Activated naive CD4-positive, alpha-beta T cell treated with anti-CD3 and anti-CD28 coated beads for 36 hours (primary cell): ENCODE measurements at regions of chr1 and their contacts with region 1.

Region 1: GRCh38 chr1:192516776-192517297 is 58.7 kb upstream of the RGS1 start:
- DNase-seq: peak; percentile 76
- H3K4me3 Mint-ChIP-seq: peak overlapping the region; percentile 66
- H3K27ac Mint-ChIP-seq: peak overlapping the region; percentile 79
- H3K4me1 Mint-ChIP-seq: peaks cover 53% of the 10 kb centered on the region
- H3K27me3 Mint-ChIP-seq: no peaks in the 10 kb centered on the region

Region 2: GRCh38 chr1:192489748-192490147 is 27.1 kb before region 1 on chr1:
- CTCF ChIA-PET with region 1: no interaction called
- intact Hi-C with region 1: no loop called
- DNase-seq: peak; percentile 22
- H3K4me3 Mint-ChIP-seq: no peak overlapping the region
- H3K27ac Mint-ChIP-seq: no peak overlapping the region
- H3K4me1 Mint-ChIP-seq: no peaks in the 10 kb centered on the region
- H3K27me3 Mint-ChIP-seq: no peaks in the 10 kb centered on the region

Region 3: DNA sequence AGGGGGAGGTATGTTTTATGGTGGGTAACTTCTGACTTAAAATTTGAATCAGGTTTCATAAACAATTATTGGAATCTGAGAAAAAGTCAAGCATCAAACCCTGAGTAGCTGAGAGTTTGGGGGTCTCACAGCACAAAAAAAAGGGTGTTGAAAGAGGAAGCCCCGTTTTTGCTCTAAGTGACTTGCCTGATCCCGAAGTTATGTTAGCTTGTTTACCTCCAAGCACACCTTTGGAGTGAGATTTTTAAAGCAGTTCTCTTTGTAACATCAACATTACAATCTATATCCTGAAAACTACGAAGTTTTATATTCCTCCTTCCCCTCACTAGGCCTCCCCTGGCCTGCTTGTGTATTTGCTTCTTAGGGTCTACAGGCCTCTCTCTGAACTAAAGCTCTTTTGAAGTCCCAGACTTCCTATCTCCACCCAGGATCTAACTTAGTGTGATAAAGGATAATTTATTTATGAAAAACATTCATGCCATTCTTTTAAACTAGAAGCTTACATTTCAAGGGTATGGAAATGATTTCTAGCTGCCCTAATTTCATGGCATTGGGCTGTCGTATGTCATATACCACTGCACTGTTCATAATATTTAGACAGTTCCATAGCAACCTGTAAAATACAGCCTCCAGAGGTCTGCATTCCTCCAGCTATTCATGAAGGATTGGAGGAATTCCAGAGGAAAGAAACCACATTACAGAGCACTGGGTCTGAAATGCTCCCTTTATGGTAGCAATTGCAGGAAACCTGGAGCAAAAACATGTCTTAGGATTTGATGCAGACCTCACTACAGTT is 22.7 kb after region 1 on chr1:
- CTCF ChIA-PET with region 1: interaction called, 6 read pairs
- intact Hi-C with region 1: loop called (anchors 1 kb)
- DNase-seq: no peak
- H3K4me3 Mint-ChIP-seq: no peak overlapping the region
- H3K27ac Mint-ChIP-seq: peak overlapping the region; percentile 51
- H3K4me1 Mint-ChIP-seq: peaks cover 28% of the 10 kb centered on the region
- H3K27me3 Mint-ChIP-seq: no peaks in the 10 kb centered on the region

Region 4: DNA sequence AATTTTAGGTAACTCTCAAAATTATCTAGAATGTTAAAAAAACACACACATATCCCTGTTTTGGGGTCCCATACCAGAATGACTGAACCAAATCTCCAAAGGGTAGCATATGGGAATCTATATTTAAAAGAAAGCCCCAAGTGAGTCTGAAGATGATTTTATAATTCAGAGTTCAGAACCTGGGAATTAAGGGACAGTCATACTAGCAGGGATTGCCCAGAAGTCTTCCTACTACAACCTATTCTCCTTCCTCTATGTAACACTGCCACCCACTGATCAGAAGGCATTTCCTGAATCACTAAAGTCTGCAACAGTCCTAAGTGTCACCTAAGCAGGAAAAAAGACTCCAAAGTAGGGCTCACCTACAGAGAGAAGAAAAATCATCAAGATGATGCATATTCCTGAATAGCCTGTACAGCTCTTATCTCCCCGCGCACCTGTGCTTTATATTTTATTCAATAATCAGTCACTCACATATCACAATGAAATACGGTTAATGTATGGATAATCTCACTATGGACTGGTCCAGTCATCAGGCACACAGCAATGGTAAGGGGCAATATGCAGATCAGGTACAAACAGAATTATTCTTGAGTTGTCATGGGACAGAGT is 63.6 kb after region 1 on chr1:
- CTCF ChIA-PET with region 1: interaction called, 4 read pairs
- intact Hi-C with region 1: loop called (anchors 1 kb)
- DNase-seq: peak; percentile 42
- H3K4me3 Mint-ChIP-seq: no peak overlapping the region
- H3K27ac Mint-ChIP-seq: no peak overlapping the region
- H3K4me1 Mint-ChIP-seq: peaks cover 27% of the 10 kb centered on the region
- H3K27me3 Mint-ChIP-seq: no peaks in the 10 kb centered on the region

Region 5: GRCh38 chr1:192639607-192640368 is 123.0 kb after region 1 on chr1:
- CTCF ChIA-PET with region 1: no interaction called
- intact Hi-C with region 1: loop called (anchors 1 kb)
- DNase-seq: peak; percentile 12
- H3K4me3 Mint-ChIP-seq: no peak overlapping the region
- H3K27ac Mint-ChIP-seq: no peak overlapping the region
- H3K4me1 Mint-ChIP-seq: peaks cover 18% of the 10 kb centered on the region
- H3K27me3 Mint-ChIP-seq: peaks cover 7% of the 10 kb centered on the region

Region 6: DNA sequence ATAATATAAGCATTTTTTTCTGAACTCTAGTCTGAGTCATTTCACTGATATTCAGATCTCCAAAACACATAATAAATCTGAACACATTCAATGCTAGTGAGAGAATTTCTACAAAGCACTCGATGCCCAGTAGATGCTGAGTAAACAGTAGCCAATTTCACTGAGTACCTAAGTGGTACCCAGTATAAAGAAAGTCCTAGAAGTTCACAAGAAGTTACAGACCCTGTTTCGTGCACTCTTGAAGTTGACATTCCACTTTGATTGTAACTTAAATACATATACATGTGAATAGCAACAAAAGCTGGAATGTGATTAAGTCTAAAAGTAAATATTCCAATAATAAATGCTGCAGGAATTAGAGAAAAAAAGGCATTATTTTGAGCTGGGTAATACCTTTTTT is 258.8 kb after region 1 on chr1:
- CTCF ChIA-PET with region 1: no interaction called
- intact Hi-C with region 1: no loop called
- DNase-seq: no peak
- H3K4me3 Mint-ChIP-seq: no peak overlapping the region
- H3K27ac Mint-ChIP-seq: no peak overlapping the region
- H3K4me1 Mint-ChIP-seq: no peaks in the 10 kb centered on the region
- H3K27me3 Mint-ChIP-seq: peaks cover 3% of the 10 kb centered on the region

Region 7: GRCh38 chr1:194052514-194053333 is 1535.9 kb after region 1 on chr1:
- CTCF ChIA-PET with region 1: no interaction called
- intact Hi-C with region 1: loop called (anchors 10 kb)
- DNase-seq: no peak
- H3K4me3 Mint-ChIP-seq: peak overlapping the region; percentile 55
- H3K27ac Mint-ChIP-seq: peak overlapping the region; percentile 81
- H3K4me1 Mint-ChIP-seq: peaks cover 59% of the 10 kb centered on the region
- H3K27me3 Mint-ChIP-seq: no peaks in the 10 kb centered on the region